ENCODE measurements at regions of chr11 and their contacts with region 1.

Region 1: GRCh38 chr11:64787526-64788320 is 9.4 kb upstream of the SF1 start:
- DNase-seq: peak; percentile 66
- H3K4me3 Mint-ChIP-seq: no peak overlapping the region
- H3K27ac Mint-ChIP-seq: no peak overlapping the region
- H3K4me1 Mint-ChIP-seq: no peaks in the 10 kb centered on the region
- H3K27me3 Mint-ChIP-seq: no peaks in the 10 kb centered on the region
- CTCF ChIP-seq: peak; percentile 81

Region 2: GRCh38 chr11:64803163-64803845 is 15.6 kb after region 1 on chr11 and contains the start of gene MAP4K2:
- CTCF ChIA-PET with region 1: interaction called, 21 read pairs
- POLR2A ChIA-PET with region 1: no interaction called
- intact Hi-C with region 1: no loop called
- DNase-seq: peak; percentile 87
- H3K4me3 Mint-ChIP-seq: peak within 1 kb of the TSS; percentile 88
- H3K27ac Mint-ChIP-seq: peak within 1 kb of the TSS; percentile 81
- H3K4me1 Mint-ChIP-seq: peaks cover 9% of the 10 kb centered on the region
- H3K27me3 Mint-ChIP-seq: no peaks in the 10 kb centered on the region
- CTCF ChIP-seq: peak; percentile 16
- total RNA-seq, gene MAP4K2: 4.9 and 6.8 TPM in 2 replicates

Region 3: GRCh38 chr11:64834723-64835620 is 47.2 kb after region 1 on chr11:
- CTCF ChIA-PET with region 1: interaction called, 16 read pairs
- POLR2A ChIA-PET with region 1: interaction called, 3 read pairs
- intact Hi-C with region 1: no loop called
- DNase-seq: peak; percentile 87
- H3K4me3 Mint-ChIP-seq: peak overlapping the region; percentile 60
- H3K27ac Mint-ChIP-seq: peak overlapping the region; percentile 28
- H3K4me1 Mint-ChIP-seq: peaks cover 10% of the 10 kb centered on the region
- H3K27me3 Mint-ChIP-seq: no peaks in the 10 kb centered on the region
- CTCF ChIP-seq: no peak

Region 4: GRCh38 chr11:64971421-64972233 is 183.9 kb after region 1 on chr11 and contains the start of gene MAJIN:
- CTCF ChIA-PET with region 1: no interaction called
- POLR2A ChIA-PET with region 1: no interaction called
- intact Hi-C with region 1: no loop called
- DNase-seq: no peak
- H3K4me3 Mint-ChIP-seq: no peak within 1 kb of the TSS
- H3K27ac Mint-ChIP-seq: peak within 1 kb of the TSS; percentile 76
- H3K4me1 Mint-ChIP-seq: peaks cover 21% of the 10 kb centered on the region
- H3K27me3 Mint-ChIP-seq: no peaks in the 10 kb centered on the region
- CTCF ChIP-seq: no peak
- total RNA-seq, gene MAJIN: not detected in 2 replicates